G401 (cell line): ENCODE measurements at regions of chr12 and their contacts with region 1.

Region 1: GRCh38 chr12:64890873-64891468 is 66.5 kb downstream of the TBC1D30 start:
- DNase-seq: peak; percentile 76

Region 2: GRCh38 chr12:65039306-65039705 is 148.3 kb after region 1 on chr12:
- in situ Hi-C with region 1: no loop called
- DNase-seq: no peak

Region 3: GRCh38 chr12:65121049-65121955 is 230.3 kb after region 1 on chr12 and contains the start of gene WIF1:
- in situ Hi-C with region 1: loop called (anchors 10 kb)
- DNase-seq: no peak
- total RNA-seq, gene WIF1: 25.7 and 29.6 TPM in 2 replicates